CD8-positive, alpha-beta T cell (primary cell): ENCODE measurements at regions of chr6 and their contacts with region 1.

Region 1: DNA sequence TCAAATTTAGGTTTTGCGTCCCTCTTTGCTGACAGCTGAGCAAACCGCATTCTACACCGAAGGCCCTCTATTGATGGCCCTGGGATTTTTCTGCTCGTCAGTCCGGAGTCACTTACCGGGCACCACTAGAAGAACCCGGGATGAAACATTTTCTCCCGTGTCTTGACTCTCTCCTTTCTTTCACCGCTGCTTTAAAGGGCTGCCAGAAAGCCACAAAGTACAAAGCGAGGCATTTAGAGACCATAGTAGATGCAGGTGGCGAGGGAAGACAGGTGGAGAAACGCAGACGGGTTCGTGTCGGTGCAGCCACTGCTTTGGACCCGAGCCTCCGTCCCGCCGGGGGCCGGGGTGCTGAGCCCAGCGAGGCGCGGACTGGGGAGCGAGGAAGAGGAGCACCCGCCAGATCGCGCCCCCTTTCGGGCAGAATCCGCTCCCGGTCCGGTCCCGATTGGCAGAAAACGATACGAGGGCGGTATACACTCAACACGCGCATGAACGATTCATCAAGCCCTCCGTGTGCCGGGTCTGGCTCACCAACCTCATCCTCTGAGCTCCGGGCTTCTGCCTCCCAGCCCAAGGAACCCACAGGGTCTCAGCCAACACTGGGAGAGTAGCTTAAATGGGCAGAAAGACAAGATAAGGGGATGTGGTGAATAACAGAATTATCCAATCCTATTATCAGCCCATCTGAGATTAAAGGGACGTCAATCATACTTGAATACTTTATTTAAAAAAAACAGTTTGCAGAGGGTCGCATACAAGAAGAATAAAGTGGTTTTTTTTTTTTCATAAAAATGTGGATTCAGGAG is 84.9 kb downstream of the TRIM27 start:
- DNase-seq: peak; percentile 54 to 90 (median 82)
- ATAC-seq: peak; percentile 68
- H3K4me3 ChIP-seq: peak overlapping the region; percentile 74 to 75
- H3K4me3 Mint-ChIP-seq: peak overlapping the region; percentile 92
- H3K27ac ChIP-seq: peak overlapping the region; percentile 44 to 58
- H3K27ac Mint-ChIP-seq: peak overlapping the region; percentile 89
- H3K4me1 ChIP-seq: peaks cover 14% of the 10 kb centered on the region
- H3K4me1 Mint-ChIP-seq: peaks cover 14% of the 10 kb centered on the region
- H3K27me3 ChIP-seq: peaks cover 0 to 7% of the 10 kb centered on the region in 2 experiments
- H3K27me3 Mint-ChIP-seq: peaks cover 18% of the 10 kb centered on the region
- CTCF ChIP-seq: peak; percentile 63

Region 2: DNA sequence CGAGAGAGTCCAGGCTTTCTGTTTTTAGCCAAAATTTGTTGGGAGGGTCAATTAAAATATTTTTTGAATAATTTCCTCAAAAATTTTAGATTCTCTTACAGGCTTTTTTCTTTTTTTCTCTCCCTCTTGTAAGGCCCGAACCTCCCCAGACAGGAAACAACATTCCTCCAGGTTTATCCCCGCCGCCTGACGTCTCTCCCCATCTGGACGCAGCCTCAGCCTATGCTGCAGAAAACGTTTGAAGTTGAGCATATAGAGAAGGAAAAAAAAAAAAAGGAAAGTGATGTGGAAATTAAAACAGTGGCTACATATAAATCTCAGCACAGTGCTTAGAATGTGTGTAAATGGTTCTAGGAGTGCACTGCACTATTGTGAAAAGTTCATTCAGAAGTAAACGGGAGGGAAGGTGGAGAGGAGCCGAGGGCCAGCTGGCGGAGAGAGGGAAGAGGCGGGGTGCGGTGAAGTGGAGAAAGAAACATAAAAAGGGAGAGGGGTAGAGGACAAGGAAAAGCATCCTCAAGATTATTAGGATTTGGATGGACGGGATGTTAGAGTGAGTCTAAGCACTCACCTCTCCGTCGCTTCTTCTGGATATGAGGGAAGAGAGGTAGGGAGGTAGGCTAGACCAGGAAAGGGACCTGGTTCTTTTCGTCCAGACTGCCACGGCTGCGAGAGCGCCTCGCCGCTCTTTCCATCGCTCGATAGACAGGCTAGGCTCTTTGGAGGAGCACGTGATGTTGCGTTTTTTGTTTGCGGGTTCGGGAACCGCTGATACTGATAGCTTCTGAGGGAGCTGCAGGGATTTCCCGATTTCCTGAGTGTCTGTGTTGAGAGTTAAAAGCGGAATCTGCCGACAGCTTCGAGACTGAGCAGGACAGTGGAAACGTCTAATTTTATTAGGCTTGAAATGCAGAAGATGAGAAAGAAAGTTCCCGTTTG is 13.8 kb before region 1 on chr6:
- CTCF ChIA-PET with region 1: interaction called, 15 read pairs
- POLR2A ChIA-PET with region 1: no interaction called
- intact Hi-C with region 1: no loop called
- DNase-seq: no peak
- ATAC-seq: no peak
- H3K4me3 ChIP-seq: no peak overlapping the region
- H3K4me3 Mint-ChIP-seq: no peak overlapping the region
- H3K27ac ChIP-seq: no peak overlapping the region
- H3K27ac Mint-ChIP-seq: no peak overlapping the region
- H3K4me1 ChIP-seq: peaks cover 6% of the 10 kb centered on the region
- H3K4me1 Mint-ChIP-seq: peaks cover 12% of the 10 kb centered on the region
- H3K27me3 ChIP-seq: peaks cover 26 to 47% of the 10 kb centered on the region in 2 experiments
- H3K27me3 Mint-ChIP-seq: peaks cover 69% of the 10 kb centered on the region
- CTCF ChIP-seq: no peak

Region 3: GRCh38 chr6:28887796-28888496 is 49.1 kb after region 1 on chr6:
- CTCF ChIA-PET with region 1: interaction called, 14 read pairs
- POLR2A ChIA-PET with region 1: interaction called, 3 read pairs
- intact Hi-C with region 1: loop called (anchors 1 kb)
- DNase-seq: no peak
- ATAC-seq: no peak
- H3K4me3 ChIP-seq: no peak overlapping the region
- H3K4me3 Mint-ChIP-seq: no peak overlapping the region
- H3K27ac ChIP-seq: no peak overlapping the region
- H3K27ac Mint-ChIP-seq: no peak overlapping the region
- H3K4me1 ChIP-seq: peaks cover 25% of the 10 kb centered on the region
- H3K4me1 Mint-ChIP-seq: peaks cover 30% of the 10 kb centered on the region
- H3K27me3 ChIP-seq: no peaks in the 10 kb centered on the region
- H3K27me3 Mint-ChIP-seq: no peaks in the 10 kb centered on the region
- CTCF ChIP-seq: no peak

Region 4: DNA sequence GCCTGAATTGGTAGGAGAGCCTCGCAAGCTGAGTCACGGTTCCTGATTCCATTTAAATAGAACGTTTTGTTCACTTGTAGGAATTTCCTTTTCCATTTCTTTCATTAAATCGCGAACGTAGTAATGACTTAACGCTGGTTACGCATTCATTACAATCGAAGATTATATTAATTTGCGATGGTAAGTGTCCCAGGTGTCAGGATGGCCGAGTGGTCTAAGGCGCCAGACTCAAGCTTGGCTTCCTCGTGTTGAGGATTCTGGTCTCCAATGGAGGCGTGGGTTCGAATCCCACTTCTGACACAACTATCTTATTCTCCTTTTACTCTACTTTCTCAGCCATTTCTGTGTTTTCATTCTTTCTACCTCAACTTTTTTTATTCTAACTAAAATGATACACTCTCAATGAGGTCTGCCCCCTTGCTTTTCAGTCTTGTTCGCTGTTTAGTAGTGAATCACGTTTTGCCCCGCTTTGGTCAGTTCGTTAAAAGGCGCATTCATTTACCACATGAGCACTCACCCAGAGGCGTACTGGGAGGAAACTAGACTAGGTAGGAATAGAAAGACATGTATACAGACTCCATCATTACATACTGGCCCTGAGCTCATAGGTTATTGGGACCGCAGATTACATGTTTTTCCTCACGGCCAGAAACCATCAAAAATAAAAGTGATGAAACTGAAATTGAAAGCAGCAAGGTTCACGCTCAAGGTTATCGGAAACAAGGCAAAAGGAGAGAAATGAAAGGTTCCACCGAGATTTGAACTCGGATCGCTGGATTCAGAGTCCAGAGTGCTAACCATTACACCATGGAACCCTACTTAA is 102.2 kb after region 1 on chr6:
- CTCF ChIA-PET with region 1: interaction called, 27 read pairs
- POLR2A ChIA-PET with region 1: interaction called, 4 read pairs
- intact Hi-C with region 1: loop called (anchors 1 kb)
- DNase-seq: peak in 8 of 9 experiments; percentile 58 to 92 (median 70)
- ATAC-seq: peak; percentile 70
- H3K4me3 ChIP-seq: peak overlapping the region; percentile 66 to 81
- H3K4me3 Mint-ChIP-seq: peak overlapping the region; percentile 91
- H3K27ac ChIP-seq: peak overlapping the region; percentile 70 to 79
- H3K27ac Mint-ChIP-seq: peak overlapping the region; percentile 96
- H3K4me1 ChIP-seq: peaks cover 40% of the 10 kb centered on the region
- H3K4me1 Mint-ChIP-seq: peaks cover 46% of the 10 kb centered on the region
- H3K27me3 ChIP-seq: no peaks in the 10 kb centered on the region
- H3K27me3 Mint-ChIP-seq: no peaks in the 10 kb centered on the region
- CTCF ChIP-seq: no peak

Region 5: GRCh38 chr6:29005183-29005885 is 166.5 kb after region 1 on chr6 and contains the start of gene ZNF311:
- CTCF ChIA-PET with region 1: interaction called, 24 read pairs
- POLR2A ChIA-PET with region 1: no interaction called
- intact Hi-C with region 1: no loop called
- DNase-seq: peak in 3 of 9 experiments; percentile 19 to 63 (median 45)
- ATAC-seq: peak; percentile 61
- H3K4me3 ChIP-seq: peak within 1 kb of the TSS; percentile 43 to 45
- H3K4me3 Mint-ChIP-seq: peak within 1 kb of the TSS; percentile 84
- H3K27ac ChIP-seq: no peak within 1 kb of the TSS
- H3K27ac Mint-ChIP-seq: peak within 1 kb of the TSS; percentile 53
- H3K4me1 ChIP-seq: peaks cover 5% of the 10 kb centered on the region
- H3K4me1 Mint-ChIP-seq: peaks cover 12% of the 10 kb centered on the region
- H3K27me3 ChIP-seq: peaks cover 0 to 3% of the 10 kb centered on the region in 2 experiments
- H3K27me3 Mint-ChIP-seq: peaks cover 22% of the 10 kb centered on the region
- CTCF ChIP-seq: no peak
- total RNA-seq, gene ZNF311: not detected

Region 6: GRCh38 chr6:29589423-29590048 is 750.7 kb after region 1 on chr6:
- CTCF ChIA-PET with region 1: interaction called, 5 read pairs
- POLR2A ChIA-PET with region 1: no interaction called
- intact Hi-C with region 1: loop called (anchors 2 to 5 kb)
- DNase-seq: peak in 8 of 9 experiments; percentile 16 to 68 (median 53)
- ATAC-seq: peak; percentile 80
- H3K4me3 ChIP-seq: no peak overlapping the region
- H3K4me3 Mint-ChIP-seq: no peak overlapping the region
- H3K27ac ChIP-seq: no peak overlapping the region
- H3K27ac Mint-ChIP-seq: no peak overlapping the region
- H3K4me1 ChIP-seq: no peaks in the 10 kb centered on the region
- H3K4me1 Mint-ChIP-seq: no peaks in the 10 kb centered on the region
- H3K27me3 ChIP-seq: peaks cover 0 to 5% of the 10 kb centered on the region in 2 experiments
- H3K27me3 Mint-ChIP-seq: peaks cover 45% of the 10 kb centered on the region
- CTCF ChIP-seq: peak; percentile 98